Activated CD4-positive, alpha-beta T cell treated with anti-CD3 and anti-CD28 coated beads for 36 hours (primary cell): ENCODE measurements at regions of chr10 and their contacts with region 1.

Region 1: DNA sequence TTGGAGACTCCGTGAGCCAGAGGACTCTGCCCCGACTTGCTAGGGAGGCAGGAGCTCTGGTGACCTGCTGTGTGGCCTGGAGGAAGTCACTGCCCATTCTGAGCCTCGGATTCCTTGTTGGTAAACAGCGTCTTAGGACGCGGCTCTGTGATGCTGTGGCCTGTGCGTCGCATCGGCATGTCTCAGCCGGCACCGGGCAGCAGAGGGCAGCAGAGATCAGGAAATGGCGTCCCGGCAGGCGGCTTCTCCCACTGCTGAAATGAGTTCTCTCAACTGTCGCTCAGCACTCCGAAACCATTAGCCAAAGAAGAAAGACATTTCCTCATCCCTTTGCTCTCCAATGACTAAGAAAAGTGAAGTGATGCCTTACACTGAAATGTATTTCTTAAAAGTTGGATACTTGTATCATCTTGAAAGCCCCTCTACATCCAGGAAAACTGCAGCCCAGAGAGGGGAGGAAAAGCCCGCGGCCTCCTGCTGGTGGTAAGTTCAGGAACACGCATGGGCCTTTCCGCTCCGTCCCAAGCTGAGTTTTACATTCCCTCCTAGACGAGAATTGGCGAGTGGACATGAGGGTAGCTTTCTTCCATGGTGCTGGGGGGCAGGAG is 91.7 kb downstream of the WDR11 start:
- DNase-seq: peak; percentile 89
- ATAC-seq: peak; percentile 97
- H3K4me3 Mint-ChIP-seq: no peak overlapping the region
- H3K27ac Mint-ChIP-seq: no peak overlapping the region
- H3K4me1 Mint-ChIP-seq: peaks cover 5% of the 10 kb centered on the region
- H3K27me3 Mint-ChIP-seq: peaks cover 14% of the 10 kb centered on the region

Region 2: GRCh38 chr10:120891367-120891766 is 51.5 kb before region 1 on chr10:
- CTCF ChIA-PET with region 1: no interaction called
- POLR2A ChIA-PET with region 1: no interaction called
- intact Hi-C with region 1: no loop called
- DNase-seq: no peak
- ATAC-seq: no peak
- H3K4me3 Mint-ChIP-seq: no peak overlapping the region
- H3K27ac Mint-ChIP-seq: no peak overlapping the region
- H3K4me1 Mint-ChIP-seq: no peaks in the 10 kb centered on the region
- H3K27me3 Mint-ChIP-seq: no peaks in the 10 kb centered on the region

Region 3: DNA sequence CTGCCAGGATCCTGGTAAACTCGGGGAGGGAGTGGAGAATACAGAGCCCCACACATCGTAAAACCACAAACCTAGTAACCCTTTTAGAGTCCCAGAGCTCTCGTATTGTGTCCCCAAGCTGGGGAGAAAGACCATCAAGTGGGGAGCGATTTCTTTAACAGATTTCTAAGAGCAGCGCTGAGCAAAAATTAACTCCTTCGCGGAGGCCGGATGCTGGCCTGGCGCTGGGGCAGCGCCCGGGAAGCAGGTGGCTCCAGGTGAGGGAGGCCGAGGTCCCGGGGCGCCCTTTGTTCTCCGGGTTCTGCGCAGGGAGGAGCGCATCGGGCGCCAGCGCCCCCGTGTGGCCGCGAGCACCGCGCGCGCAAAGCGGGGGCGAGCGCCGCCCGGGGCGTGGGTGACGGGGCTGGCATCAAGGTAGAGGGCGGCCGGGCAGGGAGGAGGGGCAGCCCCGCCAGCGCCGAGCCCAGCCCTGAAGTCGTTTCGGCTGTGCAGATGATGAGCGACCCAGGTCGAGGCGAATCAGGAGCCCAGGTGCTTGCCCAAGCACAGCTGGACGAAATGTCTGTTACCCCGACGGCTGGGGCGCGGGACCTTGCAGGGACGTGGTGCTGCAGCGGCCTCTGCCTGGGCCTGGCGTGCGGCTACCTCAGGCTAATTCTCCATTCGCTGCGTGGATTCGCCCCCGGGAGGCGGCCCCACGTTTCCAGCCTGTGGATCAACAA is 665.7 kb after region 1 on chr10:
- CTCF ChIA-PET with region 1: interaction called, 3 read pairs
- POLR2A ChIA-PET with region 1: no interaction called
- intact Hi-C with region 1: loop called (anchors 2 to 5 kb)
- DNase-seq: peak; percentile 67
- ATAC-seq: peak; percentile 84
- H3K4me3 Mint-ChIP-seq: no peak overlapping the region
- H3K27ac Mint-ChIP-seq: no peak overlapping the region
- H3K4me1 Mint-ChIP-seq: no peaks in the 10 kb centered on the region
- H3K27me3 Mint-ChIP-seq: peaks cover 27% of the 10 kb centered on the region

Region 4: GRCh38 chr10:121696854-121697253 is 753.9 kb after region 1 on chr10:
- CTCF ChIA-PET with region 1: interaction called, 3 read pairs
- POLR2A ChIA-PET with region 1: no interaction called
- intact Hi-C with region 1: loop called in 1 of 2 experiments (anchors 1 kb)
- DNase-seq: peak; percentile 56
- ATAC-seq: no peak
- H3K4me3 Mint-ChIP-seq: no peak overlapping the region
- H3K27ac Mint-ChIP-seq: no peak overlapping the region
- H3K4me1 Mint-ChIP-seq: no peaks in the 10 kb centered on the region
- H3K27me3 Mint-ChIP-seq: no peaks in the 10 kb centered on the region

Region 5: GRCh38 chr10:121734589-121735045 is 791.7 kb after region 1 on chr10:
- CTCF ChIA-PET with region 1: no interaction called
- POLR2A ChIA-PET with region 1: no interaction called
- intact Hi-C with region 1: loop called (anchors 1 to 2 kb)
- DNase-seq: peak; percentile 40
- ATAC-seq: no peak
- H3K4me3 Mint-ChIP-seq: no peak overlapping the region
- H3K27ac Mint-ChIP-seq: no peak overlapping the region
- H3K4me1 Mint-ChIP-seq: peaks cover 11% of the 10 kb centered on the region
- H3K27me3 Mint-ChIP-seq: peaks cover 41% of the 10 kb centered on the region